ENCODE measurements at regions of chr1 and their contacts with region 1.

Region 1: GRCh38 chr1:2194898-2195673 is 514 bp upstream of the FAAP20 start:
- ATAC-seq: peak; percentile 8 to 73 (median 40)
- H3K4me3 ChIP-seq: peak overlapping the region; percentile 52 to 75 (median 67)
- H3K27ac ChIP-seq: peak overlapping the region; percentile 77 to 87
- H3K4me1 ChIP-seq: peaks cover 55 to 61% of the 10 kb centered on the region in 2 donors

Region 2: DNA sequence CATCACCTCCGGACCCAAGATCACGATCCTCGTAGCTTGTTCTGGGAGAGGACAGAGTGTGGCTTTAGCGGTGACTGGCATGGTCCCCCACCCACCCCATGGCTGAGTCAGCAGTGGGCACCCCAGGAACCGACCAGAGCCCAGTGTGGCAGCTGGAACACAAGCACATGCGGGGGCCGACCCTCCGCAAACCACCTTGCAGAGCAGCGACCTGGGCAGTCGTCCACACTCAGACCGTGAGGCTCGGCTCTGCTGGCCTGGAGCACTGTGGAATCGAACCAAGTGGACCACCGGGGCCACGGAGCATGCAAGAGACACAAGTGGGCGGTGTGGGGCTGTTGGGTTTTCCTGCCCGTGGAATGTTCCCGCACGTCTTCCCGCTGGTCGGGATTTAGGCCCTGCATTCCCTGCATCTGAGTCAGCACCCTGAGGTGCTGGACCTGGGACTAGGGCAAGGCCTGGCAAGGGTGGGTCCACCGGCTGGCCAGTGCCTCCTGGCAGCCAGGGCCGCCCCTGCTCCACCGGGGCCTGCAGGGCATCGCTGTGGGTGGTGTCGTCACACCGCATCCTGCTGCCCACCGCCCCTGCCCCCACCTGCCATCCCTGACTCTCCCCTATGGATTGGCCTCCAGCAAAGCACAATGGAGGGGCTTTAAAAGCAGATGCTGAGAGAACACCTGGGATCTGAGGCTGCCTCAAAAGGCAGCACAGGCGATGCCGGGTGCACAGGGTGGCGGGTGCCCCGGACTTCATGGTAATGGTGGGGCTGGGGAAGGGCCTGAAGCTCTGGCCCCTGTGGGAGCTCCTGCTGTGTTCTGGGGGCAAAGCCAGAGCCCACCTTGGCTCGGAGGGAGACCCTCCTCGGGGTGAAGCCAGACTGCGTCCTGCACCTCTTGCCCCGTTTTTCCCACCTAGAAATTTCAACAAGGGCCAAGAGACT is 177.7 kb after region 1 on chr1:
- in situ Hi-C with region 1: loop called in 7 of 9 experiments (anchors 10 to 25 kb)
- ATAC-seq: peak in 2 of 8 experiments; percentile 9 to 11
- H3K4me3 ChIP-seq: no peak overlapping the region
- H3K27ac ChIP-seq: no peak overlapping the region
- H3K4me1 ChIP-seq: peaks cover 0 to 6% of the 10 kb centered on the region in 2 donors

Region 3: GRCh38 chr1:2381741-2382620 is 186.9 kb after region 1 on chr1:
- in situ Hi-C with region 1: loop called in 8 of 9 experiments (anchors 5 to 25 kb)
- ATAC-seq: peak; percentile 78 to 97 (median 91)
- H3K4me3 ChIP-seq: peak overlapping the region in 1 of 5 donors; percentile 8
- H3K27ac ChIP-seq: peak overlapping the region in 1 of 2 donors; percentile 18
- H3K4me1 ChIP-seq: peaks cover 5 to 7% of the 10 kb centered on the region in 2 donors

Region 4: DNA sequence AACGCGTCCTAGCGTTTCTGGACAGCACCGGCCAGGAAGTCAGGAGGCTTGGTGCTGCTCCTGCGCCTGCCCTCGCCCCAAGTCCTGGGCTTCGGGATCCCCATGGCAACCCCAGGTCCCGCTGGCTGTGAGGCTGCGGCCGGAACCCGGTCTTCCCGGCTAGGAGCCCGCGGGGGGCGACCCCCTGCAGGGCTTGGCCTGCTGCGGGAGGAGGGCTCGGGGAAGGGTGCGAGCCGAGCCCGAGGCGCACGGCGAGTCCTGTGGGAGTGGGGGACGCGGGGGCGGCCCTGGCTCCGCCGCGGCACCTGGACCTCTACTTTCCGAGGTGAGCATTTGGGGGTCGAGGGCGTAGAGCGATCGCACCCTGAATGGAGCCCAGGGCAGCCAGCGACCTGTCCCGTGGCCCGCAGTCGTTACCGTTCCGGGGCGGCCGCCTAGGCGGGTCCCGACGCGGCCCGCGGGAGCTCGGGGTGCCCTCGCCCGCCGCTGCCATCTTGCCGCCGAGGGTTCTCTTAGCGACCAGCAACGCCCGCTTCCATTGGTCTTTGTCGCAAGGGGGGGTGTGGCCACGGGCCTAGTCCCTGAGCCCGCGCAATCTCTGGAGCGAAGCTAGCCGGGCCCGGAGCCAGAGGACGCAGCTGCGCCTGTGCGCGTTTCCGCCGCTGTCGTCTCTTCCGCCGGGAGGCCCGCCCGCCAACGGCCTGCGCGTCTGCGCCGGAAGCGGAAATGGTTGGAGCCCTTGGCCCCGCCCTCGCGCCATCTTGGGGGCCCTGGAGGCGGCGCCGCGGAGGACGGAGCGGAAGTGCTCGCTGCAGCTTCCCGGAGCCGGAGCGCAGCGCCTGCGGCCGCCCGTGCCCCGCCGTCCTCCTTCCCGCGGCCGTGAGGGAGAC is 196.2 kb after region 1 on chr1 and contains the starts of genes MORN1 and RER1:
- in situ Hi-C with region 1: loop called in 6 of 9 experiments (anchors 5 to 25 kb)
- ATAC-seq: peak; percentile 67 to 96 (median 94)
- H3K4me3 ChIP-seq: peak within 1 kb of the TSS; percentile 74 to 98 (median 85)
- H3K27ac ChIP-seq: peak within 1 kb of the TSS; percentile 85 to 98
- H3K4me1 ChIP-seq: peaks cover 15 to 18% of the 10 kb centered on the region in 2 donors
- total RNA-seq, gene MORN1: 13.5 to 28.6 (median 21.8) TPM
- total RNA-seq, gene RER1: 57.8 to 165 (median 86.4) TPM

Measured in motor neuron (in vitro differentiated cells).